Prostate gland (tissue), 2 donors: ENCODE measurements at regions of chr6 and their contacts with region 1.

Region 1: GRCh38 chr6:170295510-170296422 is 4.9 kb upstream of the DLL1 start:
- DNase-seq: peak; percentile 41
- H3K4me3 ChIP-seq: peak overlapping the region; percentile 36 to 49
- H3K27ac ChIP-seq: no peak overlapping the region
- H3K4me1 ChIP-seq: no peaks in the 10 kb centered on the region
- H3K27me3 ChIP-seq: no peaks in the 10 kb centered on the region
- CTCF ChIP-seq: no peak
- POLR2A ChIP-seq: no peak

Region 2: GRCh38 chr6:169831450-169832246 is 464.1 kb before region 1 on chr6:
- intact Hi-C with region 1: loop called (anchors 5 kb)
- DNase-seq: peak; percentile 64
- H3K4me3 ChIP-seq: no peak overlapping the region
- H3K27ac ChIP-seq: no peak overlapping the region
- H3K4me1 ChIP-seq: no peaks in the 10 kb centered on the region
- H3K27me3 ChIP-seq: no peaks in the 10 kb centered on the region
- CTCF ChIP-seq: peak; percentile 93 to 95 (median 95)
- POLR2A ChIP-seq: no peak

Region 3: DNA sequence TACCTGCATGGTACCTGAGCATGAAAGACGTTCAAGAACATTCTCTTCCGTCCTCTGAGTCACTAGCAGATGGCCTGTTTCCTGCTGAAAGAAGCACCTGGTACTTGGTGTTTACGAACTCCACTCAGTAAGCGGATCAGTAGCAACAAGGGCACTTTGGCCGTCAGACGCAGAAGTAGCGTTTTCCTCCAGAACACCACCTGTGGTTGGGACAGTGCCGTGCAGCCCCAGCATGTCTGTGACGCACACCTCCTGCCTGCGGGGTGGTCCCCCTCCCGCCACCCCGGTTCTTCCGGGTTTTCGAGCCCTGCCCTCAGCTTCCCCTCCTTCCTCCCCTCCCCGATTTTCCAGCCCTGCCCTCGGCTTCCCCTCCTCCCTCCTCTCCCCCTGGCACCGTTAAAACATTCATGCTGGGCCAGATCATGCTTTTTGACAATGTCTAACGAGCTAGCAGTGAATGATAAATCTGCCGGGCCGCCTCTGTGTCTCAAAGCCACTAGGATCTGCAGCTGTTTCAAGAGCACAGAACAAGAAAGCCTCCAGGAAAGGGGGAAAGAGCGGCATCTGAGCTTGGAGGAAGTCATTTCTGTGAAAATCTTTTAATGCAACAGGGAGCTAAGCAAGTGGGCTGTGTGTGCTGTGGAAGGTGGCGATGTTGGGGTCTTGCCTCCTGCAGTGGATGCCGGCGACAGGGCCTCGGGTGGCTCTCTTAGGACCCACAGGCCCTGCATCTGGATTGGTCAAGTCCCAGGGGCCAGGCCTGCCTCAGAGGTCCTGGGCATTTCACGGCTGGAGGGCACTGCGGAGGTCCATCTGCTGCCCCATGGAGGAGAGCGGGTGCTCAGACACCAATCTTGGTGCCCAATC is 336.4 kb before region 1 on chr6:
- intact Hi-C with region 1: loop called (anchors 5 kb)
- DNase-seq: peak; percentile 71
- H3K4me3 ChIP-seq: no peak overlapping the region
- H3K27ac ChIP-seq: peak overlapping the region in 1 of 2 donors; percentile 35
- H3K4me1 ChIP-seq: no peaks in the 10 kb centered on the region
- H3K27me3 ChIP-seq: no peaks in the 10 kb centered on the region
- CTCF ChIP-seq: peak in 2 of 4 experiments; percentile 42 to 47
- POLR2A ChIP-seq: no peak

Region 4: DNA sequence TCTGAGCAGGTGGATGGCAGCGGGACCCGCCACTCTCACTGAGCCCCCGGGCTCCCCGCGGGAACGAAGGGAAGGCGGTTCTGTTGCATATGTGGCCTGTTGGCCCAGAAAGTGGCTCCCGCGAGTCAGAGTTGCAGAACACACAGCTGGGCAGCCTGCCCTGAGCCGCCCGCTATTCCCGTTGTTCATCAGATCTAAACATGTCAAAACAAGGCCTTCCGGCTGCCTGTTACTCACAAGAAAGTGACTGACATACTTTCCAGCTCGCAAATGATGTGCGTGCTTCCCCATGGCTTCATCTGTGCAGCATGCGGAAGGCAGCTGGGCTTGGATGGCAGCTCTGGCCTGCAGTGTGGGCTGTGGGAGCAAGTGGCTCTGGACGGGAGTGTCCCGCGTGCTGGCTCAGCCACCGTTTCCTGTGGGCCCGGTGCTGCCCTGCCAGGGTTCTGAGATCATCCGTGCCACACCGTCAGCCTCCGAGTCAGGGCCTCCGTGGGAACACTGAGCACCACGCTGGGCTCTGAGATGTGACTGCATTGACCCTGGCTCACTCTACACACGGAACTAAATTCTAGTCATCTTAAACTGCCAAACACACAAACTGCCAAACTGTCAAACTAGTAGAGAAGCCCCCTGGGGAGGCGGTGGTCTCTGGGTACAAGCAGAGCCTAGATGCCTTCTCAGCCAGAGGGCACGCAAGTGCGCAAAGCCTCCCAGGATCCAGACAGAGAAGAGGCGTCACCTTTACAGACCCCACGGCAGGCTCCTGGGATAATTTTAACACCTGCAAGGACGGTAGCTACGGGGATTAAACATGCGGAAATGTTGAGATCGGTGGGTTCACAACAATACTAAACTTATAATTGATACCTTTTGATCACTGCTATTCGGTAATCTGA is 316.9 kb before region 1 on chr6:
- intact Hi-C with region 1: no loop called
- DNase-seq: peak; percentile 76
- H3K4me3 ChIP-seq: no peak overlapping the region
- H3K27ac ChIP-seq: no peak overlapping the region
- H3K4me1 ChIP-seq: no peaks in the 10 kb centered on the region
- H3K27me3 ChIP-seq: no peaks in the 10 kb centered on the region
- CTCF ChIP-seq: no peak
- POLR2A ChIP-seq: no peak

Region 5: DNA sequence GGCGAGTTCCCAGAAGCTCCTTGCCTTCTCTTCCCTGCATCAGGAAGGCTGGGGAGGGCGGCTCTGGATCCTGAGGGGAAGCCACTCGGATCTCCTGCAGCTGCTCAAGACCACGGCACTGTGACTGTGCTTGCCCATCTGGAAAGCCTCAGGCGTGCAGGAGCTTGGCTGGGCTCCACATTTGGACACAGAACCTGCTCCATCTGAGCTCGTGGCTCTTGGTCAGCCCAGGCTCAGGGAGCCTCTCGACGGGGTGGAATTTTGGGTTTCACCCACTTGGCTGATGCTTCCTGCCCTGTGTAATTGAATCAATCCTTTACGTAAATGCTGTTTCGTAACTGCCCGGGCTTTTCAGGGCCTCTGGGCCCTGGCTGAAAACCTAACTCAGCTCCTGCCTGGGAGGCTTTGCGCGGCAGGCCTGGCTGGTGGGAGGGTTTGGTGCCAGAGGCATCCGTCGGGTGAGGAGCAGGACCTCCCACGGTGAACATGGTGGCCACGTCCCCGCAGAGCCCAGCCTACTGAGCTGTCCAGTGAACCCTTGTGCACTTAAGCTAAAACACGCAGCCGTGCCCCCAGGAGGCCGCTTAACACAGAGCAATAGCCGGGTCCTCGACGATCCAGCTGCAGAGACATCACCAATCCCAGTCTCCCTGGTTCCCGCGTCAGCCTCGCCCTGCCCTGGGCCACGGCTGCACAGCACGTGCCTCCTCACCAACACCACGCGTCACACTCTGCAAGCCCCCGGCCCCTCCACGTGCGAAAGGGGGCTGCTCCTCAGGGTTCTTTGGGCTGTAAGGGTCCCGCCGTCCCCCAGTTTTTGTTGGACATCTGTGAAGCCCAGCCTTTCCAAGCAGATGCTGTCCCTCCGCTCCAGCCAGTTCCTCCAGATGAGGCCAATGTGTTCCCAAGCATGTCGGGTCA is 245.9 kb before region 1 on chr6:
- intact Hi-C with region 1: loop called (anchors 10 kb)
- DNase-seq: peak; percentile 48
- H3K4me3 ChIP-seq: no peak overlapping the region
- H3K27ac ChIP-seq: peak overlapping the region; percentile 51 to 63
- H3K4me1 ChIP-seq: no peaks in the 10 kb centered on the region
- H3K27me3 ChIP-seq: no peaks in the 10 kb centered on the region
- CTCF ChIP-seq: no peak
- POLR2A ChIP-seq: no peak